Sciatic nerve (tissue), 2 donors: ENCODE measurements at regions of chr1 and their contacts with region 1.

Region 1: DNA sequence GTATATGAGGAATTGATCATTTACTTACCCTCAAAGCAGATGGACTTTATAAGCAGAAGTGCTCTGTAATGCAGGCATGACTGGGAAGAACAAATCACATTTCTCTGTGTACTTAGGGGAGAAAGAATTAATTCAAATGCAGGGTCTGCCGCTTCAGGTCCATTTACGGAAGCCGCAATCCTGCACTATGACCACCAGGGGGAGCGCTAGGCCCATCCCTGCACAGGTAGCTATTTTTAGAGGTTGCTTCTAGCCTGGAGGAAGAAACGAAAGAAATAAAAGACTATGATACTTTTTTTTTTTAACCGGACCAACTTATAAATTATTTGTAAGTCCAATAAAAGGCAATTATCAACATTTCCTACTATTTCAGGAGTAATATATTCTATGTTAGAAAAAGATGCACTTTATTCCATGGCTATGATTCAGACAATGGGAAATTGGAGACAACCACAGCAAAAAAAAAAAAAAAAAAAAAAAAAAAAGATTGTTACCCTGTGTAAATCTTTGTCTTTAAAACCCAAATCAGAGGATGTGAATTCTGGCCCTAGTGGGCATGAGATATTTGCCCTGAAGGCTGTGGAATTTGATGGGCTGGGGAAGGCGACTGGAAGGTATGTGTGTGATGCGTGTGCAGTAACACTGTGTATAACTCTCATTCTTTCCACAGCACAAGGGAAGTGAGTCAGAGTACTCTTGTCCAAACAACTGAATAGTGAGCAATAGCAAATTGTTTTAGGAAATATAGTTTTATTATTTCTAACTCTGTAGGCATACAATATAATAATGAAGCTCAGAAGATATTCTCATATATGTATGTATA is 12.9 kb upstream of the FYB2 start:
- DNase-seq: peak; percentile 73
- ATAC-seq: peak; percentile 57

Region 2: DNA sequence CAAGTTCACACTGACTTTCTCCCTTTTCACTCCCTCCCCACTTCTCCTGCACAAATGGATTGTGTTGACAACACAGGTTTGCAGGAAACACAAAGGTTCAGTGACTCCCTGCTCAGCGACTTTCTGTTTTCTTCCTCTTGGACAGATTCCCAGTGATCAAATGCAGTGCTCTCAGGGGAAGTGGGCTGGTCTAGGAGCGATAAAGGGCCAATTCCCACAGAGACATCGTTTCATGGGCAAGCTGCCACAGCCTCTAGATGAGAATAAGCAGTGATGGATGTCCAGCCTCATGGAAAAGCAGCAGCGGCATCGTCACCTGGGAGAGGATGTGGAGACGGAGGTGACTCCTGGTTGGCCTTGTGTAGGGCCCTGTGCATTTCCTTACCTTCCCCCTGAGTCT is 43.5 kb before region 1 on chr1:
- intact Hi-C with region 1: no loop called
- DNase-seq: no peak
- ATAC-seq: no peak

Region 3: GRCh38 chr1:56854521-56855099 is 22.5 kb after region 1 on chr1 and contains the start of gene C8A:
- intact Hi-C with region 1: no loop called
- DNase-seq: no peak
- ATAC-seq: no peak
- total RNA-seq, gene C8A: not detected

Region 4: DNA sequence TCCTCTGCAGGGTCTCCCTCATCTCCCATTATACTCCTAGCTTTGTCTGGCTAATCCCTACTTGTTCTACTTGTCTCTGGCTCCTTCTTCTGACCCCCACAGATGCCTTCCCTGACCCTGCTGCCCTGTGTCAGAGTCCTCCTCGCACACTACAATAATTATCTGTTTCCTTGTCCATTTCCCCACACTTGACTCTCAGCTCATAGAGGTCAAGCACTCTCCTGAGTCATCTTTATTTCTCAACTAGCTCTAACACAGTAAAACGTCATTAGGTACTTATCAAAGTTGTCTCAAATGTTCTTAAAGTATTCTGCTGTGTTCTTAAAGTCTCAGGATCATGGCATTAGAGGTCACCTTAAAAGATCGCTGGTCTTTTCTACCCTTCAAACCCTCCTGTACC is 69.6 kb after region 1 on chr1:
- intact Hi-C with region 1: no loop called
- DNase-seq: no peak
- ATAC-seq: no peak

Region 5: GRCh38 chr1:58047265-58047858 is 1215.3 kb after region 1 on chr1:
- intact Hi-C with region 1: loop called (anchors 10 kb)
- DNase-seq: no peak
- ATAC-seq: no peak